PC-9 (cell line): ENCODE measurements at regions of chr6 and their contacts with region 1.

Region 1: DNA sequence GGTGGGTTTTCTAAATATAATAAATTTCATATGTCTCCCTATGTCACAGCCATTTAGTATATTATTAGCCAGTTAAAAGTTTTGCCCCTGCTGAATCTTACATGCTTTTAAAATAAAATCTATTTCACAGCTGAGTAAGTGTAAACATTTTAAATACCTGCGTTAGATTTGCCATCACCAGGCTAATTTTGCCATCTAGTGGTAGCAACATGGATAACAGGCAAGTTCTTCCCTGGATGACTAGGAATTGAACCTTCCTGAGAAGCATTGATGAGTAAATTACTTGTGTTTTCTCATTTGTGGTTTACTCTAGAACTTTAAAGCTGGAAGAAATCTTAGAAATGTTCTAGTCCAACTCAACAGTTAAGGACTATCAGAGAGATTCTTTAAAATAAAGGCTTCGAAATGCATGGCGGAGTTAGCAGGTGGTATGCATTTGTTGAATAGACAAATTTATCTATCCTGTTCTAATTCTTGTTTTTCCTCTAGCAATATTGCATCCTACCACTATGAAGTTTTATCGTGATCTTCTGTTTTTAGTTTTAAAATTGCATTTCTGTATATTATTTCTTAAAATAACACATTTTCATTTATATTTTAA is 2.6 kb downstream of the PRSS35 start:
- DNase-seq: peak; percentile 27 to 55
- H3K4me3 ChIP-seq: no peak overlapping the region
- H3K27ac ChIP-seq: no peak overlapping the region
- H3K4me1 ChIP-seq: no peaks in the 10 kb centered on the region
- H3K27me3 ChIP-seq: no peaks in the 10 kb centered on the region
- CTCF ChIP-seq: peak; percentile 85

Region 2: DNA sequence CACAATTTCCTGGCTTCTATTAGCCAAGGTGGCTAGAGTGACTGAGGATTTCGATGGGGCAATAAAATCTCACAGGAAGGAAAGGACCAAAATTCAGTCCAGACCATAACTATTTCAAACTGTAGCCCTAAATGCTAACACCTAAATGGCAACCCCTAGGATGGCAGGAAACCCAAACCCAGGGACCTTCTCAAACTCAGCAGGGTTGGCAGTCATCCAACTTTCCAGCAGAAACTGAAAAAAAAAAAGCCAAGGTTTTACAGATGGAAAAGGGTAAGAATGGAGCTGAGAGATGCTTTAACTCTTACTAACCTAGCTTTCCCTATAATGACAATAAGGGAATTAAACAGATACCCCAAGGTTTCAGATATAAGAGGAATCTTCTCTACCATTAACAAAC is 1278.0 kb before region 1 on chr6:
- CTCF ChIA-PET with region 1: no interaction called
- POLR2A ChIA-PET with region 1: no interaction called
- intact Hi-C with region 1: no loop called
- DNase-seq: no peak
- H3K4me3 ChIP-seq: no peak overlapping the region
- H3K27ac ChIP-seq: no peak overlapping the region
- H3K4me1 ChIP-seq: no peaks in the 10 kb centered on the region
- H3K27me3 ChIP-seq: no peaks in the 10 kb centered on the region
- CTCF ChIP-seq: no peak

Region 3: DNA sequence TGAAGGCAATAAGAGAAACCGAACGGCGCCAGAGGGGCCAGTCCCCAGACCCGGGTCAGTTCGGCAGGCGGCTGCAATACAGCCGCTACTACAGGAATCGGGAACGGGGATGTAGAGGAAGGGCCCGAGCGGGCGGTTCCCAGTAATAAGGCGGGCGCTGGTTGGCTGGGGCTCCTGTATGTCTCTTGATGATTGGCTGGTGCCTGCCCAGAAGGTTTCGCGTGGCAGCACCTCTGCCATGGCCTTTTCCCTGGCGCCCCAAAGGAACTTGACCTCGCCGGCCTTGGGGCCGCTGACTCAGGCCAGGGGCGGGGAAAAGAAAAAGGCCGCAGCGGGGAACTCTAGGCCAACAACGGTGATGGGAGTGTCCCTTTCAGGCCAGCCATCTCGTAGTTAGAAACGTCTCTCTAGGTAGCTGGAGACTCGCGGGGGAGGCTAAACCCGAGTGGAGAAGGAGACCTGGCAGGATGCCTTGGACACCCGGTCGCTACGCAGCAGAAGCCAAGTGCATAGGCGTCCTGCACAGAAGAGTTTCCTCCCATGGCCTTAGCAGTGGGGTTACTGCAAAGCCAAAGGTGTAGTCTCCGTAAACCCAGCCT is 1267.2 kb before region 1 on chr6 and contains the start of gene IBTK:
- CTCF ChIA-PET with region 1: no interaction called
- POLR2A ChIA-PET with region 1: no interaction called
- intact Hi-C with region 1: loop called (anchors 5 kb)
- DNase-seq: peak; percentile 85 to 96
- H3K4me3 ChIP-seq: peak within 1 kb of the TSS; percentile 90
- H3K27ac ChIP-seq: peak within 1 kb of the TSS; percentile 89
- H3K4me1 ChIP-seq: peaks cover 19% of the 10 kb centered on the region
- H3K27me3 ChIP-seq: no peaks in the 10 kb centered on the region
- CTCF ChIP-seq: no peak
- total RNA-seq, gene IBTK: 23.1 and 25.9 TPM in 2 replicates

Region 4: DNA sequence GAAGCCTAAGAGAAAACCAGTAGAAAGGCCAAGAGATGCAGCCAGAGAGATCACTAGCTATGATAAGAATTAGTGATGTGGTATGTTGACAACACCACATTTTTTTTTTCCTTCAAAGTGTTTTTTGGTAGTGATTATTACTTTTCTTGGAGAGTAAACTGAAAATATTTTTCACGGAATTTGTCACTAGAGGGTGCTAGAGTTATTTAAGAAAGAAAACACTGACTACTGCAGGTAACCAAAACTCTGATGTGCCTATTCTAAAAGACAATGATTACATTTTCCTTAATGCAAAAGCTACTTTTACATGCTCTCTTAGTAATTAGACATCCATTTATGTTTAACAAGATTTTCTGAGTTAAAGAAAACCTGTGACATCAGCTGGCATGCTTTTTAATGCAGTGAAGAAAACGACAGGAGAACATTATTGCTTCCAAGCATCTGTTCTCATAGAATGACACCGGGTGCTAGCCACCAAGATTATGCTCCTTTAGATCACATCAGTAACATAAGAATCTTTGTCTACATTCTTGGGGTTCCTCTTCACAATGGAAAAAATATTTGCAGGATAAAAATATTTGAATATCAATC is 293.0 kb before region 1 on chr6:
- CTCF ChIA-PET with region 1: interaction called, 5 read pairs
- POLR2A ChIA-PET with region 1: no interaction called
- intact Hi-C with region 1: loop called (anchors 1 kb)
- DNase-seq: no peak
- H3K4me3 ChIP-seq: no peak overlapping the region
- H3K27ac ChIP-seq: no peak overlapping the region
- H3K4me1 ChIP-seq: no peaks in the 10 kb centered on the region
- H3K27me3 ChIP-seq: no peaks in the 10 kb centered on the region
- CTCF ChIP-seq: peak; percentile 61

Region 5: GRCh38 chr6:83365931-83366330 is 149.0 kb before region 1 on chr6:
- CTCF ChIA-PET with region 1: no interaction called
- POLR2A ChIA-PET with region 1: no interaction called
- intact Hi-C with region 1: no loop called
- DNase-seq: no peak
- H3K4me3 ChIP-seq: no peak overlapping the region
- H3K27ac ChIP-seq: no peak overlapping the region
- H3K4me1 ChIP-seq: no peaks in the 10 kb centered on the region
- H3K27me3 ChIP-seq: no peaks in the 10 kb centered on the region
- CTCF ChIP-seq: no peak

Region 6: DNA sequence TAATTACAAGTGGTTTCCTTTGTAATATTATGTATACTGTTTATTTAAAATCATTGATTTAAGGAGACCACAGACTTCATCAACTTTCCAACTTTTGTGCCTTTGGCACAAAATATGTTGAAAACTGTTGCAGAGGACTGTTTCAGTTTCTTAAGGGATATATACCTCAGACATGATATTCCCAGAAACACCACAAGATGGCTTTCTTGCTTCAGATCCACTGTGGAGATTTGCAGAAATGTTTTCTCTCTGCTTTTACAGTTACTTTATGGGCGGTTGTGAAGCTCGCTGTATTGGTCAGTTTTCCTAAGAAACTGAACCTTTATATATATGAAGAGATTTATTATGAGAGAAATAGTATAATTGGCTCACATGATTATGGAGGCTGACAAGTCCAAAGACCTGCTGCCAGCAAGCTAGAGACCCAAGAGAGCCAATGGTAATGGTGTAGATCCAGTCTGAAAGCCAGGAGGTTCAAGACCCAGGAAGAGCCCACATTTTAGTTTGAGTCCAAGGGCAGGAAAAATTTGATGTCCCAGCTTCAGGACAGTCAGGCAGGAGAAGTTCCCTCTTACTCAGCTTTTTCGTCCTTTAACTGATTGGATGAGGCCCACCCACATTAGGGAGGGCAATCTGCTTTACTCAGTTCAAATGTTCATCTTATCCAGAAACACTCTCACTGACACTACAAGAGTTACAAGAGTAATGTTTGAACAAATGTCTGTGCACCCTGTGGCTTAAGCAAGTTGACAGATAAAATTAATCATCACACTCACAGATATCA is 96.9 kb before region 1 on chr6:
- CTCF ChIA-PET with region 1: interaction called, 22 read pairs
- POLR2A ChIA-PET with region 1: interaction called, 4 read pairs
- intact Hi-C with region 1: loop called (anchors 1 kb)
- DNase-seq: no peak
- H3K4me3 ChIP-seq: no peak overlapping the region
- H3K27ac ChIP-seq: no peak overlapping the region
- H3K4me1 ChIP-seq: no peaks in the 10 kb centered on the region
- H3K27me3 ChIP-seq: no peaks in the 10 kb centered on the region
- CTCF ChIP-seq: peak; percentile 66

Region 7: DNA sequence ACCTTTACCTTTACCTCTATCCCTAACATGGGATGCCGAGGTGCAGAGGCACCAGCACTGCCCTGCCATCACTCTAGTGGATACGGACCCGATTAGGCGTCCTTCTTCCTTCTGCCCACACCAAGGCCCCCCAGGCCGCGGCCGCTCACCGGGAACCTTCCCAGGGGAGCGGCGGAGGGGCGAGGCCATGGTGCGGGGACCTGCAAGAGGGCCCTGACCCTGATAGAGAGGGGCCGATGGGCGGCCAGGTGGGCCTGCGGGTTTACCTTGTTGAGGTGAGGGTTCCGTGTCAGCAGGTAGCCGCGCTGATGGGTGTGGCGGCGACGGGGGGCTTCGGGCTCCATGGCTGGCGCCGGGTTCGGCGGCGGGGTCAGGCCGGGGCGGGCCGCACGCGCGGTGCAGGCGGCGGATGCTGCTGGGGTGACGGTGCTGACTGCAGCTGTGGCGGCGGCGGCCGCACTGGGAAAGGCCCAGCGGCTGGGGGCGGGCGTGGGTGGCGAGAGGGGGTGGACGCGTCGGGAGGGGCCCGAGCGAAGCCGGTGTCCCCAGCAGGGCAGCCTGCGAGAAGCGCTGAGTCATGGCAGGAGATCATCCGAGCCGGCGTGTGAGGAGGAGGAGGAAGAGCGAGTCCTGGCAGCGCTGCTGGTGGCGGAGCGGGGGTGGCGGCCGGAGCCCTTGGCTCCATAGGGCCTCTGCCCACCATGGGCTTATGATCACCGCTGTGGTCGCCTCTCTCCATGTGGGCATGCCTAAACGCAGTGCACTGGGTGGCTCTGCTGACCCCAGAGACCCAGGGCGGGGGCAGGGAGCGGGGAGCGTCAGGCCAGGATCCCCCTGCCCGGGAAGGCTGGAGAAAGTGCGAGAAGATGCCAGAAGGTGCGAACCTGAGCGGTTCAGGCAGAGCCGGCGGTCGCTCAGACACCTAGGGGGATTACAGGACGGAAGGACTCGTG is 84.1 kb before region 1 on chr6 and contains the start of gene ME1:
- CTCF ChIA-PET with region 1: no interaction called
- POLR2A ChIA-PET with region 1: no interaction called
- intact Hi-C with region 1: loop called (anchors 5 kb)
- DNase-seq: peak; percentile 80 to 90
- H3K4me3 ChIP-seq: peak within 1 kb of the TSS; percentile 91
- H3K27ac ChIP-seq: peak within 1 kb of the TSS; percentile 92
- H3K4me1 ChIP-seq: peaks cover 48% of the 10 kb centered on the region
- H3K27me3 ChIP-seq: no peaks in the 10 kb centered on the region
- CTCF ChIP-seq: no peak
- total RNA-seq, gene ME1: 82.0 and 111 TPM in 2 replicates